WTC11 (cell line): ENCODE measurements at regions of chr17 and their contacts with region 1.

Region 1: GRCh38 chr17:76182016-76182764 is 41.1 kb upstream of the FOXJ1 start:
- DNase-seq: peak; percentile 94
- ATAC-seq: peak; percentile 90
- H3K4me3 Mint-ChIP-seq: no peak overlapping the region
- H3K27ac Mint-ChIP-seq: no peak overlapping the region
- H3K4me1 Mint-ChIP-seq: peaks cover 9% of the 10 kb centered on the region
- H3K27me3 Mint-ChIP-seq: peaks cover 4% of the 10 kb centered on the region; the same call in 1 of the 2 replicates
- CTCF ChIP-seq: peak; percentile 83

Region 2: DNA sequence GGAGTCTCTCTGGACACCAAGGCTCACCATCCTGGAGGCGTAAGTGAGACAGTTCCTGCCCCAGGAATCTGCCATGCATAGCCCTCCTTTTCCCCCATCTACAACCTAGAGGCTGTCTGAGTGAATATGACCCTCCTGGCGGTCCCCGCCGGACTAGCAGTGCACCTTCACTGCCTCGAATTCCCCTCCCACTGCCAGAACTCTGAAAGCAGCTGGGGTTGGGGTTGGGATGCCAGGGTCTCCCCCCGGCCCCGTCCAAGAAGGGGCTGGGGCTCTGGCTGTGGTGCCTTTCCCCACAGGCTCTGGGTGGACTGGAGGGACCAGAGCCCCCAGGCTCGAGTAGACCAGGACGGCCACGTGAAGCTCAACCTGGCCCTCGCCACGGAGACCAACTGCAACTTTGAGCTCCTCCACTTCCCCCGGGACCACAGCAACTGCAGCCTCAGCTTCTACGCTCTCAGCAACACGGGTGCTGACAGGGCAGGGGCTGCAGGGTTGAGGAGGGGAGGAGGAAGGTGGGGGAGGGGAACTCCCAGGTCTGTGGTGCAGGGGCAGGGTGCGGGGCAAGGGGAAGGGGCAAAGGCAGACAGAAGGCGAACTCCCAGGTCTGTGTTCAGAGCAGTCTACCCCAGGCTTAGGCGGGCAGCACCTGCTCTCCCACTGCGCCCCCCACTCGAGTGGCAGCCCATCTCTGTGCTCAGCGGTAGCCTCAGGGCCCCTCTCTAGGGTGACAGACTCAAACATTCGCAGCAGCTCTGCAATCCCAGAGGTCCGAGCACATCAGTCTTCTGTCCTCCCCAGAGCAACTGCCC is 102.0 kb before region 1 on chr17:
- CTCF ChIA-PET with region 1: interaction called, 10 read pairs
- POLR2A ChIA-PET with region 1: no interaction called
- DNase-seq: peak; percentile 49
- ATAC-seq: peak; percentile 31
- H3K4me3 Mint-ChIP-seq: peak overlapping the region; percentile 59
- H3K27ac Mint-ChIP-seq: no peak overlapping the region
- H3K4me1 Mint-ChIP-seq: peaks cover 47% of the 10 kb centered on the region
- H3K27me3 Mint-ChIP-seq: peaks cover 46% of the 10 kb centered on the region
- CTCF ChIP-seq: no peak

Region 3: DNA sequence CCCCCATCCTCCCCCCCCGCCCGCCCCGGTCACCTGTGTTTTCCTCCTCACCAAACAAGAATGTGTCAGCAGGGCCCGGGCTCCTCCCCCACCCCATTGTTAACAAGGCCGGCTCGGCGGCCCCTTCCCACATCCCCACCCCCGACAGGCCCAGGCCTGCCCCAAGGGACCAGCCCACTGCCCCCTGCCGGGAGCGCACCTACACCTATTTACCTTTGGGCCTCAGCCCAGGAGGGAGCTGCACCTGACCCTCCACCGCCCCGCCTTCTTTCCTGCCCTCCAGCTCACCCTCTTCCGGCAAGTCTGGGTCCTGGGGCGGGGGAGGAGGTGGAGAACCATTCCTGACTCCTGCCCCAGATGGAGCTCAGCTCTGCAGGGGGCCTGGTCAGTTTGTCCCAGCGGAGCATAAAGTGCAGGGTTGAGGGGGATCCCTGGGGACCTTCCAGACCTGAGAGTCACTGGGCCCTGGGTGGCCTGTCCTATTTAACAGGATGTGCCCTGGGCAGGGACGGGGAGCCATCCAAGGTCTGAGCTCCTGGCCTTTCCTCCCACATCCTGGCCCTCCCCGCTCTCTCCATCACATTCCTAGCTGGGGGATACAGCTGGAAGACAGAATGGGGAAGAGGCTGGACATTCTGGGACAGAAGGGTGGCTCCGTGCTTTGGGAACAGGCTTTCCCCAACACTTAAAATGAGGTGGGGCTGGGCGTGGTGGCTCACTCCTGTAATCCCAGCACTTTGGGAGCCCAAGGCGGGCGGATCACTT is 49.4 kb before region 1 on chr17:
- CTCF ChIA-PET with region 1: interaction called, 43 read pairs
- POLR2A ChIA-PET with region 1: interaction called, 5 read pairs
- DNase-seq: peak; percentile 83
- ATAC-seq: peak; percentile 30
- H3K4me3 Mint-ChIP-seq: peak overlapping the region; percentile 55
- H3K27ac Mint-ChIP-seq: peak overlapping the region; percentile 71
- H3K4me1 Mint-ChIP-seq: peaks cover 63% of the 10 kb centered on the region
- H3K27me3 Mint-ChIP-seq: peaks cover 41% of the 10 kb centered on the region
- CTCF ChIP-seq: no peak

Region 4: GRCh38 chr17:76153640-76154039 is 28.6 kb before region 1 on chr17:
- CTCF ChIA-PET with region 1: interaction called, 53 read pairs
- POLR2A ChIA-PET with region 1: no interaction called
- DNase-seq: no peak
- ATAC-seq: peak; percentile 28; the same call in 1 of the 2 replicates
- H3K4me3 Mint-ChIP-seq: no peak overlapping the region
- H3K27ac Mint-ChIP-seq: no peak overlapping the region
- H3K4me1 Mint-ChIP-seq: peaks cover 32% of the 10 kb centered on the region
- H3K27me3 Mint-ChIP-seq: no peaks in the 10 kb centered on the region
- CTCF ChIP-seq: no peak

Region 5: DNA sequence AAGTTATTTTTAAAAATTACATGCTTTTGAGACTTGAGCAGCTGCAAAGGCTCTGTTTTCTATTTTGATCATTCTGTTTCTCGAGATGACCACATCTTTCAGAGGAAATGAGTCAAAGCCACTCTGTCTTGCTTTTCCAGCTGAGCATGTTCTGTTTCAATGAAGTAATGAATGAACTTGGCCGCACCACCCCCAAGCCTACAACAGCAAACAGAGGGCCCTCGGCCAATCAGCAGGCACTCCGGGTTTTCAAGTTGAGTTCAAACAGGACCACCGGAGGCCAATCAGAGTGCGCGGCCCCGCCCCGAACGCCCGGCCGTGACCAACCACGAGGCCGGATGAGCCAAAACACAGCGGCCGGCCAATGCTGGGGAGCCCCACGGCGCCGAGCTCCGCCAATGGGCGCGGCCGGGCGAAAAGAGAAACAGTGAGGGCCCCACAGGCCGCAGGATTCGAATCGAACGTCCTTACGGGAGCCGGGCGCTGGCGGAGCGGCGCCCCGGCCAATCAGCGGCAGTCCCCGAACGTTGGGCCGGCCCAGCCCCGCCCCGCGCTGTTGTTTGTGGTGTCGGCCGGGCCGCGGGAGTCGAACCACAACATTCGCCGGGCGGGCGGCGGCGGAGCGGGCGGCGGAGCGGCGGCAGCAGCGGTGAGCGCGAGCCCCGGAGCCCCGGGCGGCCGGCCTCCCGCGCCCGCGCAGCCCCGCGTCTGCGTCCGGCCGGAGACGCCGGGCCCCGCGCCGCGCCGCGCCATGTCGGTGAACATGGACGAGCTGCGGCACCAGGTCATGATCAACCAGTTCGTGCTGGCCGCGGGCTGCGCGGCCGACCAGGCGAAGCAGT is 82.8 kb after region 1 on chr17 and contains the start of gene UBALD2:
- CTCF ChIA-PET with region 1: interaction called, 12 read pairs
- POLR2A ChIA-PET with region 1: interaction called, 3 read pairs
- DNase-seq: peak; percentile 99
- ATAC-seq: peak; percentile 95
- H3K4me3 Mint-ChIP-seq: peak within 1 kb of the TSS; percentile 71
- H3K27ac Mint-ChIP-seq: peak within 1 kb of the TSS; percentile 80
- H3K4me1 Mint-ChIP-seq: peaks cover 43% of the 10 kb centered on the region
- H3K27me3 Mint-ChIP-seq: no peaks in the 10 kb centered on the region
- CTCF ChIP-seq: no peak
- total RNA-seq, gene UBALD2: 24.4 to 30.3 TPM (median 28.2 TPM) in 3 replicates